ENCODE measurements at regions of chr6 and their contacts with region 1.

Region 1: GRCh38 chr6:43402820-43403219 is 24.5 kb upstream of the ABCC10 start:
- DNase-seq: no peak
- ATAC-seq: no peak
- H3K4me3 Mint-ChIP-seq: no peak overlapping the region
- H3K27ac Mint-ChIP-seq: no peak overlapping the region
- H3K4me1 Mint-ChIP-seq: no peaks in the 10 kb centered on the region
- H3K27me3 Mint-ChIP-seq: peaks cover 3% of the 10 kb centered on the region

Region 2: DNA sequence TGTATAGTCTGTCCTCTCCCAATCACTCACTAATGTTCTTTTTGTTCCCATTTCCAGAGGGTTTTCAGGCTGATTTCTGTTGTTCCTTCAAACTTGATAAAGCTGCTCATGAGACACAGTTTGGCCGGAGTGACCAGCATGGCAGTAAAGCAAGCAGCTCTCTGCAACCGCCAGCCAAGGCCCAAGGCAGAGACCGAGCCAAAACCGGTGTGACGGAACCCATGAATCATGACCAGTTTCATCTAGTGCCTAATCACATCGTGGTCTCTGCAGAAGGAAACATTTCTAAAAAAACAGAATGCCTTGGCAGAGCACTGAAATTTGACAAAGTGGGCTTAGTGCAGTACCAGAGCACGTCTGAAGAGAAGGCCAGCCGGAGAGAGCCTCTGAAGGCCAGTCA is 538.2 kb before region 1 on chr6:
- CTCF ChIA-PET with region 1: no interaction called
- POLR2A ChIA-PET with region 1: no interaction called
- intact Hi-C with region 1: no loop called
- DNase-seq: peak; percentile 26
- ATAC-seq: no peak
- H3K4me3 Mint-ChIP-seq: no peak overlapping the region
- H3K27ac Mint-ChIP-seq: peak overlapping the region; percentile 66
- H3K4me1 Mint-ChIP-seq: no peaks in the 10 kb centered on the region
- H3K27me3 Mint-ChIP-seq: no peaks in the 10 kb centered on the region

Region 3: GRCh38 chr6:43263314-43264178 is 139.3 kb before region 1 on chr6:
- CTCF ChIA-PET with region 1: interaction called, 13 read pairs
- POLR2A ChIA-PET with region 1: no interaction called
- intact Hi-C with region 1: loop called (anchors 1 kb)
- DNase-seq: peak; percentile 89
- ATAC-seq: peak; percentile 99
- H3K4me3 Mint-ChIP-seq: no peak overlapping the region
- H3K27ac Mint-ChIP-seq: no peak overlapping the region
- H3K4me1 Mint-ChIP-seq: peaks cover 3% of the 10 kb centered on the region
- H3K27me3 Mint-ChIP-seq: no peaks in the 10 kb centered on the region

Region 4: GRCh38 chr6:43308101-43308989 is 94.5 kb before region 1 on chr6 and contains the start of gene CRIP3:
- CTCF ChIA-PET with region 1: interaction called, 9 read pairs
- POLR2A ChIA-PET with region 1: no interaction called
- intact Hi-C with region 1: loop called in 1 of 2 experiments (anchors 1 kb)
- DNase-seq: peak; percentile 74
- ATAC-seq: peak; percentile 91
- H3K4me3 Mint-ChIP-seq: peak within 1 kb of the TSS; percentile 73
- H3K27ac Mint-ChIP-seq: peak within 1 kb of the TSS; percentile 59
- H3K4me1 Mint-ChIP-seq: peaks cover 3% of the 10 kb centered on the region
- H3K27me3 Mint-ChIP-seq: no peaks in the 10 kb centered on the region
- total RNA-seq, gene CRIP3: 1.6 to 1.8 TPM

Region 5: DNA sequence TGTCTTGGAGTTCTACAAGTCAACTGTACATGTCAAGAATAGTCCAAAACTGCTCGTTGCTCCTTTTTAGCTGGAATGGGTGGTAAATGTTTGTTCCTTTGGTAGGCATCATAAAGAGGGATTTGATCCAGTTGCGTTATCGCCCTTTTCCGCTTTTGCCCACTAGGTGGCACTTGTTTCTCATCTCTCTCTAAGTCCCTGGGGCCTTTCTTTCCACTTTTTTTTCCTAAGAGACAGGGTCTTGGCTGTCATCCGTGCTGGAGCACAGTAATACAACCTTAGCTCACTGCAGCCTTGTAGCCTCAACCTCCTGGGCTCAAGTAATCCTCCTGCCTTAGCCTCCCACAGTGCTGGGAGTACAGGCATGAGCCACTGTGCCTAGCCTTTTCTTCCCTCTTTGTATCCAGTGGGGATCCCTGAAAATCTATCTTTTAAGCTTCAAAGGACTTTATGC is 205.5 kb after region 1 on chr6:
- CTCF ChIA-PET with region 1: no interaction called
- POLR2A ChIA-PET with region 1: no interaction called
- intact Hi-C with region 1: no loop called
- DNase-seq: peak; percentile 79
- ATAC-seq: peak; percentile 66
- H3K4me3 Mint-ChIP-seq: no peak overlapping the region
- H3K27ac Mint-ChIP-seq: no peak overlapping the region
- H3K4me1 Mint-ChIP-seq: peaks cover 2% of the 10 kb centered on the region
- H3K27me3 Mint-ChIP-seq: no peaks in the 10 kb centered on the region

Measured in activated CD4-positive, alpha-beta T cell treated with anti-CD3 and anti-CD28 coated beads for 36 hours (primary cell).